Left ventricle myocardium inferior (tissue), 1 donor: ENCODE measurements at regions of chr6 and their contacts with region 1.

Region 1: DNA sequence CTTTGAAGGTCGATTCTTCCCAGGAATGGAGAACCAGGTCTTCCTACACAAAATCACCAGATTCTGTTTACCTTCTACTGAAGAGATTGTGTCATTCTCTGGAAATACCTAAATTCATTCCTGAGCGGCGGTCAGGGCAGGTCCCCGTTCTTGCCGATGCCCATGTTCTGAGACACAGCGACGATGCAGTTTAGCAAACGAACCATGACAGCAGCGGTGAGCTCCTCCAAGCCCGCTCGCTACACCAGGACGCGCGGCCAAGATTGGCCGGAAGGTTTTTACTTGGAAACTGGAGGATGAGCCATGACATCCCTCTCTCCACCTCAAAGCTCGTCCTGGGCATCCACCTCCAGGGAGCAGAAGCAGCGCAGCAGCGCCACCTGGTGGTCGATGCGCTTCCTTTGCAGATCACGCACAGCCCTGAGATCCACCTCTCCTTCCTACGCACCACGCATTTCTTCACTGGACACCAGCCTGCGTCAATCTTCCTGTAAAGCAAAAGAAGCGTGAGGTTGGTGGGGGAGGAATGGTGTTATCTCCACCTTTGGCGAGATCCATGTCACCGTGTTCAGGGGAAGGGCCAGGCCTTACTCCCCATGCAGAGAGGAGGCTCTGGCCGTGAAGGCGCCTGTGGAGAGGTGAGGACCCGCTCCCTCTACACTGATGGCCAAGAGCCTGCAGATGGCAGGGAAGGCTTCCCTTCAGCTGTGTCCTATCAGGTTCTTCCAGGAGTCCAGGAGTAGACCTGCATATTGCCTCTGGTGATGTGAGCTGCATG is 9.9 kb upstream of the HLA-B start:
- DNase-seq: peak; percentile 88
- H3K4me3 ChIP-seq: peak overlapping the region; percentile 49
- H3K27ac ChIP-seq: no peak overlapping the region
- H3K4me1 ChIP-seq: peaks cover 3% of the 10 kb centered on the region
- H3K27me3 ChIP-seq: peaks cover 35% of the 10 kb centered on the region
- CTCF ChIP-seq: peak; percentile 95

Region 2: DNA sequence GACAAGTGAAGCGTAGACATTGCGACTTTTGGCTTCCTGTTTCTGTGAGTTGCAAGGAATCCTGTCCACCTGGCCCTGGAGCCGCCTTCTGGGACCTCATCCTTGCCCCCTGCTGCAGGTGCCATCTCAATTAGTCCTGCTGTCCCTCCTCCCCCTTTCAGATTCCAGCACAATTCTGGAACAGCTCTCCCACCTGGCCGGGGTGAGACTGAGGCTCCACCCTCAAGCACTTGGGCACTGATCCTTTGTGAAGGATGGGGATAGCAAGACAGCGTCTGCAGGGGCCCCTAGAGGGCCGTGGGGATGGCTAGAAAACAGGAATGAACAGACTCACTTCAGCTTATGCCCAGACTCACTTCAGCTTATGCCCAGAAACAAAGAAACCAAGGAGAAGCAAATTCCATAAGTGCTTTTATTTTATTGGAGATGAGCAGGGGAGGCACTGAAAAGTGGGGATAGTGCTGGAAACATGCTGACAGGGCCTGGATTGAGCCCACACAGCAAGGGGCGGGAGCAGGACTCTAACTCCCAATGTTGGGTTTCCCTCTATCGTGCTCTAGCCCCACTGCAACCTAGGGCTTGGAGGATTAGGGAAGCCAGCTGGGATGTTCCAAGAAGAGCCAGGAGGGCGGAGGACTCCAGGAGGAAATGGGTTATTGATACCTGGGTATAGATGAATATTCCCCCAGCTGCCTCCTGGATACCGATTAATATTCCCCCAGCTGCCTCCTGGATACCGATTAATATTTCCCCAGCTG is 255.9 kb before region 1 on chr6:
- intact Hi-C with region 1: no loop called
- DNase-seq: no peak
- H3K4me3 ChIP-seq: no peak overlapping the region
- H3K27ac ChIP-seq: no peak overlapping the region
- H3K4me1 ChIP-seq: peaks cover 27% of the 10 kb centered on the region
- H3K27me3 ChIP-seq: peaks cover 9% of the 10 kb centered on the region
- CTCF ChIP-seq: no peak

Region 3: GRCh38 chr6:31197559-31198305 is 169.2 kb before region 1 on chr6:
- intact Hi-C with region 1: loop called (anchors 5 kb)
- DNase-seq: peak; percentile 91
- H3K4me3 ChIP-seq: peak overlapping the region; percentile 74
- H3K27ac ChIP-seq: peak overlapping the region; percentile 98
- H3K4me1 ChIP-seq: peaks cover 31% of the 10 kb centered on the region
- H3K27me3 ChIP-seq: no peaks in the 10 kb centered on the region
- CTCF ChIP-seq: no peak